Adrenal gland (tissue), 19 donors: ENCODE measurements at regions of chr20 and their contacts with region 1.

Region 1: GRCh38 chr20:24619212-24619611 is 149.8 kb downstream of the SYNDIG1 start:
- DNase-seq: no peak
- H3K4me3 ChIP-seq: no peak overlapping the region
- H3K27ac ChIP-seq: no peak overlapping the region
- H3K4me1 ChIP-seq: no peaks in the 10 kb centered on the region
- H3K27me3 ChIP-seq: no peaks in the 10 kb centered on the region
- CTCF ChIP-seq: no peak
- POLR2A ChIP-seq: no peak

Region 2: GRCh38 chr20:24662752-24663365 is 43.6 kb after region 1 on chr20:
- intact Hi-C with region 1: loop called in 1 of 2 experiments (anchors 10 kb)
- DNase-seq: no peak
- H3K4me3 ChIP-seq: no peak overlapping the region
- H3K27ac ChIP-seq: no peak overlapping the region
- H3K4me1 ChIP-seq: no peaks in the 10 kb centered on the region
- H3K27me3 ChIP-seq: no peaks in the 10 kb centered on the region
- CTCF ChIP-seq: no peak
- POLR2A ChIP-seq: no peak